ENCODE measurements at regions of chrX and their contacts with region 1.

Region 1: DNA sequence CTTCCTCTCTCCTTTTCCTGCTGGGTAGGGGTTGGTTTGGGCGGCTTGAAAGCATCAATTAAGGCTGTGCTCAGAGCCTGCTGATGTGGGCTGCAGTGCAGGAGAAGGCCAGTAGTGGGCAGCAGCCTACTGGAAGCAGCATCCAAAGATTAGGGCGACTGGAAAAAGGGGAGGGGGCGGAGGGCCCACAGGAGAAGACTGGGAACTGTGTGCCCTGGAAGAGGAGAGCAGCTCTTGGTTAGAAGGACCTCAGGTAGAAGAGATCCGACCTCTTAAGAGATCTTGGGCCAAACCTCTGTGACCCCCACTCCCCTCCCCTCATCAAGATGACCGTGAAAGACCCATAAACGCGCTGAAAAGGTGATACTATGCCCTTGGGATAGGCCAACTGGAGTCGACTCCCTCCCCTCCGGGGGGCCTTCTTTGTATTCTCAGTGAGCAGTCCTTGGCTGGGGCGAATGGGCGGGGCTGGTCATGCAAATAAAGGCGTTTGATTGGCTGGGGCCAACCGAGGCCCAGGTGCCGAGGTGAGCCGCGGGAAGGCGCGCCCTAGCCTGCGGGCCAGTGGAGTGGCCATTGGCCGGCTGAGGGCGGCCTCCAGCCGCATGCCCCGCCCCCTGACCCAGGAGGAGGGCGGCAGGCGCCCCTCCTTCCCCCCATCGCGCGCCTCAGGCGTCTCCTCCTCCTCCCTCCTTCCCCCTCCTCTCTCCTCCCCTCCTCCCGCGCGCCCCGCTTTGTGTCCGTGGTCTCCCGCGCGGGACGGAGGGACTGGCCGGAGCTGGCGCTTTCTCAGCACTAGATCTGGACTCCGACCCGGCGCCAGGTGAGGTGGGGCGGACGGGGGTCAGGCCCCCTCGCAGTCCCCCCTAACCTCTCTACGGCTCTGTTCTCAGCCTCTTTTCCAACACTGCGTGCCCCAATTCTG is 10.1 kb downstream of the DLG3 start:
- DNase-seq: peak; percentile 95

Region 2: DNA sequence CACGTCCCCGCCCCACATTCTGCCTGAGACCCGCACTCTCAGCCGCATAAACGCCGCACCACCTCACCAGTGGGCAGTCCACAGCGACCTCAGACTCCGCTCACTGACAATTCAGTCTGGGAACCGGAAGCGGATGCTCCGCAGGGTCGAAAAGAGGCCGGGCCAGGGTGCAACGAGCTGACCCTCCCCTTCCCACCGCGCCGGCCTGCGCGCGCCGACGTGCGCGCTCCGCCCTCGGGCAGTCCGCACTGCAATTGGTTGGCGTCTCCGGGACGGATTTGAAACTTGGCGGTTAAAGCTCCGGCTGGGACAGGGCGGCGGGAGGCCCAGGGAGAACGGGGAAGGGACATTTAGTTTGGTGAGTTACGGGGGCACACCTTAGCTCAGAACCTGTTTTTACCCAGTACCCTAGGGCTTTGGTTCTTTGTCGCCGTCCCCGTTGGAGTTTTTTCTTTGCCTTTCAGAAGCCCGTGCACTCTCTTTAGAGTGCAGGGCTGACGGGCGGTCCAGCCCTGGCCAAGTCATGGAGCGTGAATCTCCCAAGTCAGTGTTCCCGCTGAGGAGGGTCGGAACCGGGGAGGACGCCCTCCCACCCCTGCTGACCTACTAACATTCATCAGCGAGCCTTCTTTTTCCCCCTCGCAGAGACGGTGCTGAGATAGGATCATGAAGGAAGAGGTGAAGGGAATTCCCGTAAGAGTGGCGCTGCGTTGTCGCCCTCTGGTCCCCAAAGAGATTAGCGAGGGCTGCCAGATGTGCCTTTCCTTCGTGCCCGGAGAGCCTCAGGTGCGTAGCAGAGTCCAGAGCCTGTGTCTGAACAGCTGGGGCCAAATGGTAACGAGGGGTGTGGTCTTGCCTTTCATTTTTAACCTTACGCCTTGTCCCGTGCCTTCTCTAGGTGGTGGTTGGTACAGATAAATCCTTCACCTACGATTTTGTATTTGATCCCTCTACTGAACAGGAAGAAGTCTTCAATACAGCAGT is 164.6 kb before region 1 on chrX and contains the starts of genes KIF4A and PDZD11:
- in situ Hi-C with region 1: no loop called
- DNase-seq: peak; percentile 95

Region 3: DNA sequence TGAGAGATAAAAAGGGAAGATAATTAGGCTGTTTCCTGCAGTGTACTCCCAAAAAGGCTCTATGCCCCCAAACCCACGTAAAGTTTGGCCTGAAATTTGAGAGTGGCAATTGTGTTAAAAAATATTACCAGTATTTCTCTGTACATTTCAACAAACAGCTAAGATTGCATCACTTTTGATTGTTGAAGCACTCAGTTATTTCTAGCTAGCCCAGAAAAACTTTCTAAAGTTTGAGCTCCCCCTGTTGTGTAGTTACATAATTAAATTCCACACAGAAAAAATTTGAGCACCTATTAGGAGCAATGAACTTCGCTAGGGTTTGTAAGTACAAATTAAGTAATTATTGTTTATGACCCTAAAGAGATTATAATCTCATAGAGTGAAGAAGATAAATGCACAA is 99.4 kb after region 1 on chrX:
- in situ Hi-C with region 1: loop called (anchors 10 kb)
- DNase-seq: peak; percentile 53

Measured in KBM-7 (cell line).